Adrenal gland (tissue), 19 donors: ENCODE measurements at regions of chr10 and their contacts with region 1.

Region 1: GRCh38 chr10:689433-690371 is at the start of gene DIP2C:
- DNase-seq: peak; percentile 67 to 83 (median 80)
- H3K4me3 ChIP-seq: peak within 1 kb of the TSS in 3 of 4 donors; percentile 25 to 65 (median 40)
- H3K27ac ChIP-seq: peak within 1 kb of the TSS in 4 of 5 donors; percentile 60 to 91 (median 79)
- H3K4me1 ChIP-seq: peaks cover 3 to 13% of the 10 kb centered on the region in 2 donors
- H3K27me3 ChIP-seq: no peaks in the 10 kb centered on the region
- CTCF ChIP-seq: no peak
- POLR2A ChIP-seq: peak in 1 of 2 donors; percentile 66
- total RNA-seq, gene DIP2C: 4.8 to 23.9 (median 22.0) TPM

Region 2: DNA sequence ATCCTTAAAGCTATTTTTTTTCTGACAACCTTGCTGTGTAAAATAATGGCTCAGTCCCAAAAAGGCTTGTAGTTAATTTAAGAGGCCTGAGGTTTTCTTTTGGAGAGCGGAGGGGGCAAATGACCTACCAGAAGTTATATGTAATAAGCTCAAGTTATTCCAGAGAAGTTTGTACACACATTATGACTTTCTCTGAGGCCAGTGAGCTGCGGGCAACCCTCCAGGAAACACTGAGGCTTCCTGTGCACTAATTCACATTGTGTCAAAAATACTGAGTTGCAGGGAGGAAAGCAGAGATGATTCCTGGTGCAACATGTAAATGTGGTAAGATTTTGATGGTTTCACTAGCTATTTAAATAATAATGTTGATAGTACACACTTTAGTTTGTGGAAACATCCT is 188.8 kb before region 1 on chr10:
- intact Hi-C with region 1: loop called in 1 of 2 experiments (anchors 10 kb)
- DNase-seq: peak in 2 of 7 donors; percentile 46 to 62
- H3K4me3 ChIP-seq: no peak overlapping the region
- H3K27ac ChIP-seq: no peak overlapping the region
- H3K4me1 ChIP-seq: no peaks in the 10 kb centered on the region
- H3K27me3 ChIP-seq: no peaks in the 10 kb centered on the region
- CTCF ChIP-seq: no peak
- POLR2A ChIP-seq: no peak

Region 3: GRCh38 chr10:511101-511848 is 178.4 kb before region 1 on chr10:
- intact Hi-C with region 1: loop called (anchors 10 kb)
- DNase-seq: peak; percentile 94 to 97 (median 95)
- H3K4me3 ChIP-seq: no peak overlapping the region
- H3K27ac ChIP-seq: peak overlapping the region in 1 of 5 donors; percentile 18
- H3K4me1 ChIP-seq: peaks cover 0 to 14% of the 10 kb centered on the region in 2 donors
- H3K27me3 ChIP-seq: no peaks in the 10 kb centered on the region
- CTCF ChIP-seq: peak; percentile 97 to 99 (median 98)
- POLR2A ChIP-seq: no peak

Region 4: DNA sequence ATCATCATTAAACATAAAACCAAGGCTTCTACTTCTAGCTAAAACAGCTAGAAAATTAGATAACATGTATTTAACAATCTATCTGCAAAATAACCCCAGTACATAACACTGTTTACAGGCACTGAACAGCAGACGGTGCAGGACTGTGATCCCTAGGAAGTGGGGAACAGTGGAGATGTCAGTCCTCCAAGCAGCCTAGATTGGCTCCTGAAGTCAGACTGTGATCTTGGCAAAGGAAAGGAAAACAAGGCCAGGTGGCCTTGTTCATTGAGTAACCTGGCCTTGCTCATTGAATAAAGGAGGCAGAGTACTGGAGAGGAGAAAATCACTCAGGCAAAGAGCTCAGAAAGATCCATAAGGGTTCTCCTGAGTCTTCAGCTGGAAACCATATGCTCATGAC is 77.5 kb after region 1 on chr10:
- intact Hi-C with region 1: loop called in 1 of 2 experiments (anchors 10 kb)
- DNase-seq: peak in 3 of 7 donors; percentile 26 to 45 (median 41)
- H3K4me3 ChIP-seq: no peak overlapping the region
- H3K27ac ChIP-seq: peak overlapping the region in 1 of 5 donors; percentile 9
- H3K4me1 ChIP-seq: no peaks in the 10 kb centered on the region
- H3K27me3 ChIP-seq: no peaks in the 10 kb centered on the region
- CTCF ChIP-seq: no peak
- POLR2A ChIP-seq: no peak